Spleen (tissue), 13 donors: ENCODE measurements at regions of chr6 and their contacts with region 1.

Region 1: DNA sequence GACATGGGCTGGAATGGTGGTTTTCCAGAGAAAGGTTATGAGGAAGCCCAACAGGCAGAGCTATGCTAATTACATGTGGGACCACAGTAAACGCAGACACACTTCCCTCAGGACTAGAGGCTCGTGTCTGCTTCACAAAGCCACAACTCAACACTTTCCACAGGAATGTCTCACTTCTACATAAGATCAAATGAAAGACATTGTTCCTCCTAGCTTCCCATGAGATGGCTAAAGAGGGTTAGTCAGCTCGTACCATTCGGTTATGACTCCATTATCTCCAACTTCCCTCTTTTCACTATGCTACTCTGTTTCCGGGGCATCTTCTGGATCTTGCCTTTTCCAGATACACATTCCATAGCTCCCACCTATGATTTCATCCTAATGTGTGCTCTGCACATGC is 29.1 kb upstream of the ZC3H12D start:
- DNase-seq: no peak
- H3K4me3 ChIP-seq: no peak overlapping the region
- H3K27ac ChIP-seq: no peak overlapping the region
- H3K4me1 ChIP-seq: peaks cover 0 to 20% (median 6%) of the 10 kb centered on the region in 6 donors
- H3K27me3 ChIP-seq: no peaks in the 10 kb centered on the region
- CTCF ChIP-seq: no peak
- POLR2A ChIP-seq: no peak

Region 2: DNA sequence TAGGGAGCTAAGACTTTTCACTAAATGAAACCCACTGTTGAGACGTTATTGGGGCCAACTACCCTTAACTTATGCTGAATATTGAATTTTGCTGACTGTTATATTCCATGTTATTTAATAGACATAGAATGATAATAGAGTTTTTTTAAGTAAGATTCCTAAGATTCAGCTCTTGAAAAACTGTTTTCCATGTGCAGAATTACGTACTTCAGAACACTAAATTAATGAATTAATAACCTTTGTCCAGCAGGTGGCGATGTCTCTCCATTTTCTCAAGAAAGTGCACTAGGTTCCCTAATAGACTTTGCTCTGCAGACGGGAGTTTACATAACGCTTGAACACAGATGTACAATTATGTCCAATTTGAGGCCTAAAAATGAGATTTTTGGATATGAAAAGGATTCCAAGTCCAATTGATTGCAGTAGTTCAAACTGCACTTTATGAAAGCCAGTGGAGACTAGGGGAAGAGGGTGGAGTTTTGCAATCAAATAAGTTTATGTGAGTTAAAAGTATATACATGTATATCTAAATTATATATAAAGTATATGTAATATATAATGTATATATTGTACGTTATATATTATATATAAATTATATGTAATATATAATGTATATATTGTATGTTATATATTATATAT is 485.0 kb before region 1 on chr6:
- intact Hi-C with region 1: loop called (anchors 5 kb)
- DNase-seq: no peak
- H3K4me3 ChIP-seq: no peak overlapping the region
- H3K27ac ChIP-seq: no peak overlapping the region
- H3K4me1 ChIP-seq: peaks cover 0 to 36% (median 23%) of the 10 kb centered on the region in 6 donors
- H3K27me3 ChIP-seq: no peaks in the 10 kb centered on the region
- CTCF ChIP-seq: peak; percentile 28 to 75 (median 63)
- POLR2A ChIP-seq: no peak

Region 3: GRCh38 chr6:149082286-149082707 is 431.6 kb before region 1 on chr6:
- intact Hi-C with region 1: loop called (anchors 10 kb)
- DNase-seq: peak; percentile 87
- H3K4me3 ChIP-seq: no peak overlapping the region
- H3K27ac ChIP-seq: no peak overlapping the region
- H3K4me1 ChIP-seq: peaks cover 0 to 39% (median 17%) of the 10 kb centered on the region in 6 donors
- H3K27me3 ChIP-seq: no peaks in the 10 kb centered on the region
- CTCF ChIP-seq: peak; percentile 67 to 91 (median 82)
- POLR2A ChIP-seq: no peak

Region 4: GRCh38 chr6:149431905-149432775 is 81.8 kb before region 1 on chr6:
- intact Hi-C with region 1: loop called (anchors 10 kb)
- DNase-seq: peak; percentile 95
- H3K4me3 ChIP-seq: no peak overlapping the region
- H3K27ac ChIP-seq: no peak overlapping the region
- H3K4me1 ChIP-seq: peaks cover 0 to 11% (median 4%) of the 10 kb centered on the region in 6 donors
- H3K27me3 ChIP-seq: no peaks in the 10 kb centered on the region
- CTCF ChIP-seq: peak; percentile 90 to 97 (median 95)
- POLR2A ChIP-seq: no peak

Region 5: GRCh38 chr6:149636116-149636515 is 122.2 kb after region 1 on chr6:
- intact Hi-C with region 1: no loop called
- DNase-seq: no peak
- H3K4me3 ChIP-seq: no peak overlapping the region
- H3K27ac ChIP-seq: no peak overlapping the region
- H3K4me1 ChIP-seq: no peaks in the 10 kb centered on the region
- H3K27me3 ChIP-seq: no peaks in the 10 kb centered on the region
- CTCF ChIP-seq: no peak
- POLR2A ChIP-seq: no peak